Activated CD8-positive, alpha-beta T cell treated with anti-CD3 and anti-CD28 coated beads, Interleukin-2, amount 10 ng/mL, durations not matched to agents 7 days and 5 days (primary cell): ENCODE measurements at regions of chr11 and their contacts with region 1.

Region 1: DNA sequence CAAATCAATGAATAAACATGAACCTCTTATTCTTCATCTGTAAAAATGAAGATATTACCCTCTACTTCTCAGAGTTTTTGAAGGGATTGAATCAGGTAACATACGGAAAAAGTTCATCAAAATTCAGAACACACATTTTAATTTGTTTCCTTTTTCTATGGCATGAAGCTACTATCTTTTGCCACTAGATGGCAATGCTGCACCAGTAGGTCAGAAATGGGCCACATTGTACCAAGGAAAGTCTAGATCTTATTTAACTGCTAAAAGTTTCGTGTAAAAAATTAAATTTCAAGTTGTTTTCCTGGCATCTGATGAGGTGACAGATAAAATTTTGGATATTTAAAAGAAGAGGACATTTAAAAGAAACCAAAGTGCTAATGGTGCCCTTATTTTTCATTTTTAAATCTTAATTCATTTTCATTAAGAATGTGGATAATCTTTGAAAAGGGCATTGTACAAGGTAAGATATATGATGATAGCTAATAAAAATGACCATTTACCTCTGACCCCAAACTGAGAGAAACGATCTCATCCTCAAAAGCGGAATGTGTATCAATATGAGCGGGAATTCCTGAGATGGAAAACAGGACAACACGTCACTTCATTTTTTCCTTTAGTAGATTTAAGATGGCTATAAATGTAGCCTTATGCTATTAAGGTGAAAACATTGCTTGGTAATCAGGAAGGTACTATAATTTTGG is 16.1 kb downstream of the ALKBH8 start:
- DNase-seq: peak; percentile 46
- ATAC-seq: peak; percentile 58
- H3K4me3 Mint-ChIP-seq: no peak overlapping the region
- H3K27ac Mint-ChIP-seq: no peak overlapping the region
- H3K4me1 Mint-ChIP-seq: no peaks in the 10 kb centered on the region
- H3K27me3 Mint-ChIP-seq: no peaks in the 10 kb centered on the region

Region 2: GRCh38 chr11:107565219-107565937 is 16.0 kb after region 1 on chr11 and contains the start of gene ALKBH8:
- CTCF ChIA-PET with region 1: interaction called, 95 read pairs
- POLR2A ChIA-PET with region 1: interaction called, 4 read pairs
- DNase-seq: peak; percentile 87
- ATAC-seq: peak; percentile 98
- H3K4me3 Mint-ChIP-seq: peak within 1 kb of the TSS; percentile 87
- H3K27ac Mint-ChIP-seq: peak within 1 kb of the TSS; percentile 94
- H3K4me1 Mint-ChIP-seq: peaks cover 51% of the 10 kb centered on the region
- H3K27me3 Mint-ChIP-seq: no peaks in the 10 kb centered on the region
- total RNA-seq, gene ALKBH8: 11.1 to 11.3 TPM

Region 3: DNA sequence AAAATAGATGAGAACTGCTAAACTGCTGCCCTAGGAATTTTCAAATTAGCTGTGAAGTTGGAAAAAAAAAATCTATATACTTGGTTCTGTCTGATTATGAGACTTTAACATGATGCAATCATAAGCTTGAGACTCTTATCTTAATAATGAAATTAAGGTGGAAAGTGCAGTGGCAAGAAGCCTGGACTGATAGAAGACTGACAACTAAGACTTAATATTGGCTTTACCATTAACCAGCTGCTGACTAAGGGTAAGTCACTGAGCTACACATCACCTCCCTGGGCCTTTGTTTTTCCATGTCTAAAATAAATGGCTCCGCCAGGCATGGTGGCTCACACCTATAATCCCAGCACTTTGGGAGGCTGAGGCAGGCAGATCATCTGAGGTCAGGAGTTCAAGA is 252.2 kb after region 1 on chr11:
- CTCF ChIA-PET with region 1: no interaction called
- POLR2A ChIA-PET with region 1: no interaction called
- DNase-seq: no peak
- ATAC-seq: no peak
- H3K4me3 Mint-ChIP-seq: no peak overlapping the region
- H3K27ac Mint-ChIP-seq: no peak overlapping the region
- H3K4me1 Mint-ChIP-seq: peaks cover 4% of the 10 kb centered on the region
- H3K27me3 Mint-ChIP-seq: no peaks in the 10 kb centered on the region